ENCODE measurements at regions of chr11 and their contacts with region 1.

Region 1: DNA sequence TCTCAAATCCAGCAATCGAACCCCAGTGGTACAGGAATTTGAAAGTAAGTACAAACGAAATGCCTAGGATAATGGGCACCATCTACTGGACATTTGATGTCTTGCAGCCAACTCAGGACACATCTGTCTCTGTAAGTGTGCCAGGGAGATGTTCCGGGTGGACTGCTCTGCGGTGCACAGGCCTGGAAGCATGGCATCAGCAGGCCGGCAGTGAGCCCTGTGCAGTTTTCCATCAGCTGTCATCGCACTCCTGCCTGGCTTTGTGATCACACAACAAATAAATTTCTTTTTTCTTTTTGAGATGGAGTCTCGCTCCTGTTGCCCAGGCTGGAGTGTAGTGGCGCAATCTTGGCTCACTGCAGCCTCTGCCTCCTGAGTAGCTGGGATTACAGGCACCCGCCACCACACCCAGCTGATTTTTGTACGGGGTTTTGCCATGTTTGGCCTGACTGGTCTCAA is 71.0 kb downstream of the JAM3 start:
- DNase-seq: peak; percentile 82
- H3K4me3 ChIP-seq: no peak overlapping the region
- H3K27ac ChIP-seq: no peak overlapping the region
- H3K4me1 ChIP-seq: no peaks in the 10 kb centered on the region
- H3K27me3 ChIP-seq: no peaks in the 10 kb centered on the region
- CTCF ChIP-seq: peak; percentile 85

Region 2: GRCh38 chr11:133078591-133079404 is 1061.1 kb before region 1 on chr11:
- CTCF ChIA-PET with region 1: no interaction called
- POLR2A ChIA-PET with region 1: no interaction called
- intact Hi-C with region 1: loop called (anchors 10 kb)
- DNase-seq: peak; percentile 71
- H3K4me3 ChIP-seq: no peak overlapping the region
- H3K27ac ChIP-seq: no peak overlapping the region
- H3K4me1 ChIP-seq: no peaks in the 10 kb centered on the region
- H3K27me3 ChIP-seq: peaks cover 45% of the 10 kb centered on the region
- CTCF ChIP-seq: peak; percentile 94

Region 3: GRCh38 chr11:133927690-133928627 is 211.9 kb before region 1 on chr11:
- CTCF ChIA-PET with region 1: interaction called, 6 read pairs
- POLR2A ChIA-PET with region 1: no interaction called
- intact Hi-C with region 1: loop called (anchors 1 kb)
- DNase-seq: peak; percentile 74
- H3K4me3 ChIP-seq: no peak overlapping the region
- H3K27ac ChIP-seq: no peak overlapping the region
- H3K4me1 ChIP-seq: no peaks in the 10 kb centered on the region
- H3K27me3 ChIP-seq: no peaks in the 10 kb centered on the region
- CTCF ChIP-seq: peak; percentile 86

Region 4: GRCh38 chr11:133966921-133967598 is 172.8 kb before region 1 on chr11:
- CTCF ChIA-PET with region 1: no interaction called
- POLR2A ChIA-PET with region 1: no interaction called
- intact Hi-C with region 1: loop called (anchors 1 kb)
- DNase-seq: peak; percentile 60
- H3K4me3 ChIP-seq: peak overlapping the region; percentile 25
- H3K27ac ChIP-seq: no peak overlapping the region
- H3K4me1 ChIP-seq: no peaks in the 10 kb centered on the region
- H3K27me3 ChIP-seq: no peaks in the 10 kb centered on the region
- CTCF ChIP-seq: peak; percentile 80

Region 5: GRCh38 chr11:134050541-134051383 is 89.1 kb before region 1 on chr11:
- CTCF ChIA-PET with region 1: interaction called, 5 read pairs
- POLR2A ChIA-PET with region 1: no interaction called
- intact Hi-C with region 1: loop called (anchors 1 kb)
- DNase-seq: peak; percentile 78
- H3K4me3 ChIP-seq: no peak overlapping the region
- H3K27ac ChIP-seq: no peak overlapping the region
- H3K4me1 ChIP-seq: peaks cover 13% of the 10 kb centered on the region
- H3K27me3 ChIP-seq: no peaks in the 10 kb centered on the region
- CTCF ChIP-seq: peak; percentile 98

Region 6: GRCh38 chr11:134261626-134262488 is 122.0 kb after region 1 on chr11:
- CTCF ChIA-PET with region 1: no interaction called
- POLR2A ChIA-PET with region 1: no interaction called
- intact Hi-C with region 1: no loop called
- DNase-seq: peak; percentile 48
- H3K4me3 ChIP-seq: no peak overlapping the region
- H3K27ac ChIP-seq: no peak overlapping the region
- H3K4me1 ChIP-seq: no peaks in the 10 kb centered on the region
- H3K27me3 ChIP-seq: no peaks in the 10 kb centered on the region
- CTCF ChIP-seq: peak; percentile 71

Measured in A673 (cell line).